ENCODE measurements at regions of chr3 and their contacts with region 1.

Region 1: GRCh38 chr3:156547637-156548036 is 7.3 kb downstream of the SSR3 start:
- DNase-seq: no peak
- ATAC-seq: no peak
- H3K4me3 ChIP-seq: no peak overlapping the region
- H3K27ac ChIP-seq: peak overlapping the region in 1 of 4 donors; percentile 29
- H3K4me1 ChIP-seq: peaks cover 76% of the 10 kb centered on the region
- H3K27me3 ChIP-seq: no peaks in the 10 kb centered on the region
- CTCF ChIP-seq: no peak
- POLR2A ChIP-seq: no peak

Region 2: GRCh38 chr3:156594219-156594683 is 46.6 kb after region 1 on chr3:
- intact Hi-C with region 1: no loop called
- DNase-seq: peak; percentile 25 to 50 (median 28)
- ATAC-seq: peak; percentile 94
- H3K4me3 ChIP-seq: no peak overlapping the region
- H3K27ac ChIP-seq: peak overlapping the region in 3 of 4 donors; percentile 35 to 77 (median 36)
- H3K4me1 ChIP-seq: peaks cover 25% of the 10 kb centered on the region
- H3K27me3 ChIP-seq: no peaks in the 10 kb centered on the region
- CTCF ChIP-seq: no peak
- POLR2A ChIP-seq: peak in 1 of 3 donors; percentile 12

Region 3: GRCh38 chr3:156633335-156633734 is 85.7 kb after region 1 on chr3:
- intact Hi-C with region 1: no loop called
- DNase-seq: peak; percentile 80 to 86 (median 85)
- ATAC-seq: peak; percentile 97
- H3K4me3 ChIP-seq: no peak overlapping the region
- H3K27ac ChIP-seq: peak overlapping the region in 2 of 4 donors; percentile 14 to 36
- H3K4me1 ChIP-seq: peaks cover 35% of the 10 kb centered on the region
- H3K27me3 ChIP-seq: no peaks in the 10 kb centered on the region
- CTCF ChIP-seq: no peak
- POLR2A ChIP-seq: no peak

Region 4: GRCh38 chr3:157148196-157148889 is 600.7 kb after region 1 on chr3:
- intact Hi-C with region 1: loop called (anchors 10 kb)
- DNase-seq: no peak
- ATAC-seq: no peak
- H3K4me3 ChIP-seq: no peak overlapping the region
- H3K27ac ChIP-seq: no peak overlapping the region
- H3K4me1 ChIP-seq: peaks cover 1% of the 10 kb centered on the region
- H3K27me3 ChIP-seq: no peaks in the 10 kb centered on the region
- CTCF ChIP-seq: no peak
- POLR2A ChIP-seq: no peak

Measured in body of pancreas (tissue), 4 donors.